ENCODE measurements at regions of chr16 and their contacts with region 1.

Region 1: DNA sequence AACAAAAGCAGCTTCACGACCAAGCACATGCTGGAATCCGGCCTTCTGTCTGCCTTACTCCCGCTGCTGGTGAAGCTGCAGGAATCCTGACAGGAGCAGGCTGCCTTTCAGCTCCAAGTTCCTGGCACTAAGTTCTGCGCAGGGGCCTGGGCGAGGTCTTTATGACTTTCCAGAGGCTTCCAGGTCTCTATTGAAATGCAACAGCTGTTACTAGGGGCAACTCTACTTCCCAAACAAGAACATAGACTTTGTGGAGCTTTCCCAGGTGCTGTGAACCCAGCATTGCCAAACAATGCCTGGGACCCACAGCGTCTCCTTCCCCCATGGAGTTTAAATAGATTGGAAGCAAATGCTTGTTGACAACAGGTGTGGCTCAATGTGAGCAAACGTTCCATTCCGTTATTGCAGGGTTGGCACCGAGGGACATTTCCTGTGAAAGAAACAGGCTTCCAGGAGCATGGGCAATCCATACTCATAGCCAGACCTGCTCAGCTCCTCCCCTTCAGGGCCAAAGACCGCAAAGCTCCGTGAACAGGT is 156.0 kb downstream of the CDH13 start:
- DNase-seq: peak; percentile 73 to 83 (median 75)
- ATAC-seq: peak; percentile 89
- H3K4me3 ChIP-seq: no peak overlapping the region
- H3K4me1 ChIP-seq: peaks cover 35% of the 10 kb centered on the region
- CTCF ChIP-seq: no peak

Region 2: GRCh38 chr16:82681592-82681991 is 101.2 kb before region 1 on chr16:
- intact Hi-C with region 1: no loop called
- DNase-seq: no peak
- ATAC-seq: no peak
- H3K4me3 ChIP-seq: no peak overlapping the region
- H3K4me1 ChIP-seq: no peaks in the 10 kb centered on the region
- CTCF ChIP-seq: no peak

Region 3: DNA sequence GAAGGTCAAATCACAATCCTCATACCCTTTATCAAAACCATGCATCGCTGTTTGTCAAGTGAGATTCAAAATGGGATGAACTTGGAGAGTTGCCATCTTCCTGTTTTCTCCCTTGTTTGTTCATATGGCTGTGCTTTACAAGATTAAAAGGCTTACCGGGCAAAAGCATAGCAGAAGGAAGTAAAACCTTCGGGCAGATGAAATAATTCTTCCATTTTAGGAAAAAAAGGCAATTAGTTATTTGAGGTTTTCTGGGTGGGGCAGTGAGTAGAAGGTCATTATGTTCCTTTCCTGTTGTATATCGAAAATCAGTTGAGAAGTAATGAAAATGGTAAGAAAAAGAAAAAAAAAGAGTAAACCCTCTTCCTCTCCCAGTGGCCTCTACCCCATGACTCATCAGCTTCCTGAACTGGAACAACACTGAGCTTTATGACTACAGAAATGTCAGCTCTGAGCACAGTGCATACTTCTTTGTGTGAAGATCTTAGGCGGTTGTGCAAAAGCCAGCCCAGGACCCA is 213.2 kb after region 1 on chr16:
- intact Hi-C with region 1: loop called in 1 of 2 experiments (anchors 10 kb)
- DNase-seq: peak in 1 of 3 donors; percentile 63
- ATAC-seq: peak; percentile 89
- H3K4me3 ChIP-seq: no peak overlapping the region
- H3K4me1 ChIP-seq: peaks cover 6% of the 10 kb centered on the region
- CTCF ChIP-seq: no peak

Region 4: GRCh38 chr16:83075956-83076355 is 293.2 kb after region 1 on chr16:
- intact Hi-C with region 1: no loop called
- DNase-seq: no peak
- ATAC-seq: no peak
- H3K4me3 ChIP-seq: no peak overlapping the region
- H3K4me1 ChIP-seq: no peaks in the 10 kb centered on the region
- CTCF ChIP-seq: no peak

Measured in mucosa of descending colon (tissue), 3 donors.